ENCODE measurements at regions of chr12 and their contacts with region 1.

Region 1: GRCh38 chr12:21613931-21614330 is 9.3 kb upstream of the GYS2 start:
- DNase-seq: no peak
- H3K4me3 Mint-ChIP-seq: no peak overlapping the region
- H3K27ac Mint-ChIP-seq: no peak overlapping the region
- H3K4me1 Mint-ChIP-seq: peaks cover 50% of the 10 kb centered on the region
- H3K27me3 Mint-ChIP-seq: no peaks in the 10 kb centered on the region

Region 2: DNA sequence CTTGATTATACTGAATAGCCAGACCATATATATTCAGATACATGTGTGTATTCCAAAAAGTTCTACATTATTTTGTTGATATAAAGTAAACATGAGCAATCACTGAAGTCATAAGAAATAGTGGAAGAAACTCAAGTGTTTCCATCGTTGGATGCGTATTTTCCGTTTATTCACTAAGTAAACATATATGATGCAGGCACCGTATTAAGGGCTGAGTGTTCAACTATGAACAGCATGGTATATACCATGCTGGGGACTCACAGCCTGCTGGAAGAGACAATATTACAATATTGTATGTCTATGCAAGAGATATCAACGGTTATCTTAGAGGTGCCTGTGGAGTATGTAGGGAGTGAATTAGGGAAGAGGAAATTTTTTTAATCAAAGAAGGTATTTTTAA is 175.3 kb before region 1 on chr12:
- CTCF ChIA-PET with region 1: no interaction called
- POLR2A ChIA-PET with region 1: no interaction called
- intact Hi-C with region 1: loop called (anchors 2 kb)
- DNase-seq: no peak
- H3K4me3 Mint-ChIP-seq: peak overlapping the region; percentile 93
- H3K27ac Mint-ChIP-seq: peak overlapping the region; percentile 96
- H3K4me1 Mint-ChIP-seq: peaks cover 39% of the 10 kb centered on the region
- H3K27me3 Mint-ChIP-seq: no peaks in the 10 kb centered on the region

Region 3: DNA sequence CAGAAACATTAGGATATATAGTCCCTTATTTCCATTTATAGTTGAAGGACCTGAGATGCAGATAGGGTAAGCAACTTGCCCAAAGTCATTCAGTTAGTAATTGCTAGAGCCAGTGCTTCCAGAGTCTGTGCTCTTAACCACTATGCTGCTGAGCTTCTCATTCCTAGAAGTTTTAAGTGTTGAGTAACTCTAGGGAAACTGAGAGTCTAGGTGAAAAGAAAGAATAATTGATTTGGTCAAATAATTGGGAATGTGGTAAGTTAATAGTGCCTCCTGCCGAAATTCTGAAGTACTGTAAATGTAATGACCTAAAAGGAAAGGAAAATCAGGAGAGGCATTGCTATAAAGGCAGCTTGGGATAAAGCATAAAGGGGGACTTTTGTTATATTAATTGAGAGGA is 162.4 kb before region 1 on chr12:
- CTCF ChIA-PET with region 1: no interaction called
- POLR2A ChIA-PET with region 1: no interaction called
- intact Hi-C with region 1: loop called (anchors 1 kb)
- DNase-seq: no peak
- H3K4me3 Mint-ChIP-seq: no peak overlapping the region
- H3K27ac Mint-ChIP-seq: no peak overlapping the region
- H3K4me1 Mint-ChIP-seq: peaks cover 40% of the 10 kb centered on the region
- H3K27me3 Mint-ChIP-seq: no peaks in the 10 kb centered on the region

Region 4: DNA sequence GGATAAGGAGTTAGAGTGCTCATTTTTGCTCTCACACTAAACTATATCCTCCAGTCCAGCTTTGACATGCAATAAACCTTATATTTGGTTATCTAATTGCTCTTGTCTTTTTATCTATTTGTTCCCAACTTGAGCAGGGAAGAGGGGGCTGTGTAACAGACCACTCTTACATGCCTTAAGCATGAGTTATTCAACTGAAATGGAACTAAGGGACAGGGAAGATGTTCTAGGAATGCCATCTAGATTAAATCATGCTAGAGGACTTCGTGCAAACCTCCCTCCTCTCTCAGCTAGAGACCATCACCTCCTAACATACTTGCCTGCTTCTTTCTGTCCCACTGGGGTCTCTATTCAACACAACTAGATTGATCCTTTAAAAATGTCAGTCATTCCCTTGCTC is 67.2 kb before region 1 on chr12:
- CTCF ChIA-PET with region 1: no interaction called
- POLR2A ChIA-PET with region 1: no interaction called
- intact Hi-C with region 1: loop called (anchors 5 kb)
- DNase-seq: no peak
- H3K4me3 Mint-ChIP-seq: no peak overlapping the region
- H3K27ac Mint-ChIP-seq: no peak overlapping the region
- H3K4me1 Mint-ChIP-seq: peaks cover 5% of the 10 kb centered on the region
- H3K27me3 Mint-ChIP-seq: no peaks in the 10 kb centered on the region

Region 5: DNA sequence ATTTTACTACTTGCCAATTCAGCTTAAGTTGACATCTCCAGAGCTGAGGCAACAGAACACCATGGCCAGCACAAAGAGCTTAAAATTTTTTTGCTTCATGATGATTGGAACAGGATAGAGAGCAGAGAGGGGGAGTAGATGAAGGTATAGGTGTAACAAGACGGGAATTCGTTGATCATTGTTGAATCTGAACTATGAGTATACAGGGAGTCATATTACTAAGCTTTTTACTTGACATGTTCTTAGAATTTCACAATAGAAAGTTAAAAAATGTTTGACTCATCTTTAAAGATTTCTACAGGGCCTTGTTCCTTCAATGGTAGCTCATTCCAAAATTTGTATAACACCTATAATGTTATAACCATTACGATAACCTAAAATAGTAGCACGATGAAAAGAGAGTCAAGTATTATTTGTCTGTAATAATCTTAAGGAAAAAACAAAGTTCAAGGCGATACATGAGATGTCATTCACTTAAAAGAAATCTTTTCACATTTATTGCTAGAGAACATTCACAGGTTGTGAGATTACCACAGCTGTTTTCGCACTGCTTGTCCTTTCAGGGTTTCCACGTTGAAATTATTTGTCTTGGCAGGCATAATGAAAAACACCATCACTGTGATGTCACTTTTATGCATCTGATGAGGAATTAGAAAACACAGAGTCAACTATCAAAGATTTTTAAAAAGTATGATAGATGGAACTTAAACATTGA is 53.9 kb before region 1 on chr12:
- CTCF ChIA-PET with region 1: interaction called, 3 read pairs
- POLR2A ChIA-PET with region 1: interaction called, 5 read pairs
- intact Hi-C with region 1: loop called (anchors 5 kb)
- DNase-seq: no peak
- H3K4me3 Mint-ChIP-seq: no peak overlapping the region
- H3K27ac Mint-ChIP-seq: peak overlapping the region; percentile 82
- H3K4me1 Mint-ChIP-seq: peaks cover 11% of the 10 kb centered on the region
- H3K27me3 Mint-ChIP-seq: no peaks in the 10 kb centered on the region

Region 6: DNA sequence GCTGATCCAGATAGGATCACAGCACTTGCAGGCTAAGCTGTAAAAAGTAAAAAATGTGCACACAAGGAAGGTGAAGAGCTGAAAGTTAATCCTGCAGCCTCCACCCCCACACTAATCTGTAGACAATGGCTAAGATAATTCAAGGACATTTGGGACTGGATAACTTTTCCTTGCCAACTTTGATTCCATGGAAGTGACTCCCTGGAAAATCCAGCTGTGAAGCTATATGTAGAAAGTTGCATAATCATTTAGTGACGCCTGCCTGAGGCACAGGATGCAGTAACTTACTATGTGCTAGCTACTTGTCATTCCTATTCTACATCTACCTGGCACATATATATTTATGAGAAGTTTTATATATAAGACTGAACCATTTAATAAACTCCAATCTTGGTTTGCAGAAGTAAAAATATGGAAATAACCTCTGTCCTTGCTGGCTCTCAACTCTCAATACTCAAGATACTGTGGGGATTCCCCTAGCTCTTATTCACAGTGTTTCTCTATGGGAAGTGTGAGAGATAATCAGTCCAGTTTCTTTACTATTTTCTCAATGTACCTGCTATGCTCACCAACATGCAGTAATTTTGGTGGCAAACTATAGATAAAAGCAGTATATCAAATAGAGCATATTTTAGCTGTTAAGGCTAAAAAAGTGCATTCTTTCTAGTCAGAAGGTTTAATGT is 28.9 kb after region 1 on chr12:
- CTCF ChIA-PET with region 1: no interaction called
- POLR2A ChIA-PET with region 1: no interaction called
- intact Hi-C with region 1: loop called (anchors 2 kb)
- DNase-seq: no peak
- H3K4me3 Mint-ChIP-seq: no peak overlapping the region
- H3K27ac Mint-ChIP-seq: peak overlapping the region; percentile 52
- H3K4me1 Mint-ChIP-seq: peaks cover 79% of the 10 kb centered on the region
- H3K27me3 Mint-ChIP-seq: no peaks in the 10 kb centered on the region

Region 7: DNA sequence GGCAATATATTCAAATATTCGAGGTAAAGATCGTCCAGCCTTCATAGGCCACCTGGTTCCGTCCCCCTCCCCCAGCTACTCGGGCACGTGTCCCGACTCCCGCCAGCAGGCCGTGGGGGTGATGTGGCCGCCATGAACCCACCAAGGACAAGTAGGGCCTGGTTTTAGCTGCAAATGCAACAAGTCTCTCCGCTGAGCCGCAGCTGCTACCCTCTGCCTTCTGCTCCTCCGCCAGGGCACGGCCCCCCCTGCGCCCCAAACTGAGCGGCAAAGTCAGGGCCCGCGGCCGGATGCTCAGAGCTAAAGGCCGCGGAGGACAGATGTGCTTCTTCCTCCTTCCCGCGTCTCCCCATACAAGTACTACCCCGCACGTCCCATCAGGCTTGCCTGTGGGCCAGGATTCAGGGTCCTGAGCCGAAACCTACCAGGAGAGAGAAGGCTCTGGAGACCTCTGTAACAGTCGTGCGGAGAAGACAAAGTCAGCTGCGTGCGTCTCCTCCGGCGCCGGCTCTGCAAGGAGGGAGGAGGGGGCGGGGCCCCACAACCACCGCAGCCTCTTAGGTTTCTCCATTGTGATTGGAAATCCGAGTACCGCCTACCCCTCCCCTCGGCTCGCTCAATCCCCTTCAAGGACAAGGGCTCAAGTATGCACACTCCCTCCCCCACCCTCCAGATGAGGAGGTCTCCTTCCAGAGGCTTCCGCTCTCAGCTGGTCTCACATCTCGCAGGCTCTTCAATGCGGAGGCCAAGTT is 43.6 kb after region 1 on chr12 and contains the start of gene LDHB:
- CTCF ChIA-PET with region 1: no interaction called
- POLR2A ChIA-PET with region 1: interaction called, 4 read pairs
- intact Hi-C with region 1: loop called (anchors 1 kb)
- DNase-seq: peak; percentile 98
- H3K4me3 Mint-ChIP-seq: peak within 1 kb of the TSS; percentile 98
- H3K27ac Mint-ChIP-seq: peak within 1 kb of the TSS; percentile 95
- H3K4me1 Mint-ChIP-seq: peaks cover 60% of the 10 kb centered on the region
- H3K27me3 Mint-ChIP-seq: no peaks in the 10 kb centered on the region
- total RNA-seq, gene LDHB: 1,684 to 1,884 TPM